ENCODE measurements at regions of chr1 and their contacts with region 1.

Region 1: DNA sequence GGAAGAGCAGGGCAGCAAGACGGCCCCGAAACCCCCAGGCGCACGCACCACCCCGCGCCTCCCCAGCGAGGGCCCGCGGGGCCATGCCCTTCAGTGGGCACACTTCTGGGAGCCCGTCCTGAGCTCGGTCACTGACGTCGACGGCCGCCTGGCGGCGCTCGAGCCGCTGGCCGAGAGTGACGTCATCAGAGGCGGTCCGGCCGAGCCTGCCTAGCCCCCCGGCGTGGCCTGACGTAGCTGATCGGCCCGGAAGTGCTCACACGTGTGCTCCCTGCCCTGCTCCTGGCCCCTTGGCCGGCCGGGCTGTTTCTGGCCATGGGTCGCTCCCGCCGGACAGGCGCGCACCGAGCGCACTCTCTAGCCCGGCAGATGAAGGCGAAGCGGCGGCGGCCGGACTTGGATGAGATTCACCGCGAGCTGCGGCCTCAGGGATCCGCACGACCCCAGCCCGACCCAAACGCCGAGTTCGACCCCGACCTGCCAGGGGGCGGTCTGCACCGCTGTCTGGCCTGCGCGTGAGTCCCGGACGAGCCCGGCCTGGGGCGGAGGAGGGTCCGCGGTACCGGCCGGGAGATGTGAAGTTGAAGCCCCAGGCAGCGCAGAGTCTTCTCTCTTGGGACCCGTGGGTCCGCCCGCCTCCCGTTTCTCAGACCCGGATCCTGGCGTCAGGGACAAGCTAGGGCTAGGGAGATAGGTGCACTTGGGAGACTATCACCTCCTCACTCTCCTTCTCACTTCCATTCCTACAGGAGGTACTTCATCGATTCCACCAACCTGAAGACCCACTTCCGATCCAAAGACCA is at the start of gene ZNF593:
- DNase-seq: peak; percentile 92 to 94
- ATAC-seq: peak; percentile 96 to 98 (median 97)
- H3K4me3 ChIP-seq: peak within 1 kb of the TSS; percentile 63 to 100 (median 88)
- H3K27ac ChIP-seq: peak within 1 kb of the TSS in 9 of 10 donors; percentile 79 to 89 (median 82)
- H3K4me1 ChIP-seq: peaks cover 5 to 33% (median 16%) of the 10 kb centered on the region in 9 donors
- H3K27me3 ChIP-seq: no peaks in the 10 kb centered on the region
- CTCF ChIP-seq: peak; percentile 80 to 97 (median 91)
- total RNA-seq, gene ZNF593: 10.7 to 26.0 (median 18.3) TPM

Region 2: DNA sequence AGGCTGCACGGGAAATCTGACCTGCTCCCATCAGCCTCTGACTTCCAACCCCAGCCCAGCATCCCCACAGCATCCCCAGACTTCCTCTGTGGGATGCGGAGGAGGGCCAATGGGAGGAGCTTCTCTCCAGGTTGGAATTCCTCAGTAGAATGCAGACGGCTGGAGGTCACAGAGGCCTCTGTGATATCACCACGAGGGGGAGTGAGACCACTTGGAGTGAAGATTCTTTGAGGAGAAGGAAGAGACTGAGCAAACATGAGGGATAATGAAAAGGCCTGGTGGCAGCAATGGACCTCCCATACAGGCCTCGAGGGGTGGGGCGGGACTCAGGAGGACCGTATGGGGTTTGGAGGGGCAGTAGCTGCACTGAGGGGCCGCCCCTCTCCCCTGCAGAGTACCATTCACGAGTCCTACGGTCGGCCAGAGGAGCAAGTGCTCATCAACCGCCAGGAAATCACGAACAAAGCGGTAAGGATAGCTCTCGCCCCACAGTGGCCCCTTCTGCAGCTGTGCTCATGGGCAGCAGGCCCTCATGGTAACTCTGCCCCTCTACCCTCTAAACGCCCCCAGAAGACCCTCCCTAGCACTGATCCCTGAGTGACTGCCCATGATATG is 20.6 kb after region 1 on chr1 and contains the start of gene CATSPER4:
- intact Hi-C with region 1: no loop called
- DNase-seq: no peak
- ATAC-seq: peak in 1 of 8 donors; percentile 28
- H3K4me3 ChIP-seq: no peak within 1 kb of the TSS
- H3K27ac ChIP-seq: no peak within 1 kb of the TSS
- H3K4me1 ChIP-seq: no peaks in the 10 kb centered on the region
- H3K27me3 ChIP-seq: no peaks in the 10 kb centered on the region
- CTCF ChIP-seq: peak in 5 of 9 donors; percentile 11 to 27 (median 24)
- total RNA-seq, gene CATSPER4: not detected

Region 3: GRCh38 chr1:26225033-26225831 is 55.4 kb after region 1 on chr1:
- intact Hi-C with region 1: loop called in 8 of 10 experiments (anchors 2 to 10 kb)
- DNase-seq: peak; percentile 65 to 76
- ATAC-seq: peak; percentile 85 to 94 (median 92)
- H3K4me3 ChIP-seq: peak overlapping the region; percentile 36 to 62 (median 55)
- H3K27ac ChIP-seq: peak overlapping the region in 9 of 10 donors; percentile 5 to 71 (median 56)
- H3K4me1 ChIP-seq: peaks cover 0 to 20% (median 12%) of the 10 kb centered on the region in 9 donors
- H3K27me3 ChIP-seq: peaks cover 0 to 28% (median 14%) of the 10 kb centered on the region in 7 donors
- CTCF ChIP-seq: no peak

Region 4: GRCh38 chr1:26496861-26497260 is 327.0 kb after region 1 on chr1:
- intact Hi-C with region 1: no loop called
- DNase-seq: no peak
- ATAC-seq: no peak
- H3K4me3 ChIP-seq: no peak overlapping the region
- H3K27ac ChIP-seq: no peak overlapping the region
- H3K4me1 ChIP-seq: peaks cover 2 to 20% (median 15%) of the 10 kb centered on the region in 9 donors
- H3K27me3 ChIP-seq: no peaks in the 10 kb centered on the region
- CTCF ChIP-seq: no peak

Region 5: DNA sequence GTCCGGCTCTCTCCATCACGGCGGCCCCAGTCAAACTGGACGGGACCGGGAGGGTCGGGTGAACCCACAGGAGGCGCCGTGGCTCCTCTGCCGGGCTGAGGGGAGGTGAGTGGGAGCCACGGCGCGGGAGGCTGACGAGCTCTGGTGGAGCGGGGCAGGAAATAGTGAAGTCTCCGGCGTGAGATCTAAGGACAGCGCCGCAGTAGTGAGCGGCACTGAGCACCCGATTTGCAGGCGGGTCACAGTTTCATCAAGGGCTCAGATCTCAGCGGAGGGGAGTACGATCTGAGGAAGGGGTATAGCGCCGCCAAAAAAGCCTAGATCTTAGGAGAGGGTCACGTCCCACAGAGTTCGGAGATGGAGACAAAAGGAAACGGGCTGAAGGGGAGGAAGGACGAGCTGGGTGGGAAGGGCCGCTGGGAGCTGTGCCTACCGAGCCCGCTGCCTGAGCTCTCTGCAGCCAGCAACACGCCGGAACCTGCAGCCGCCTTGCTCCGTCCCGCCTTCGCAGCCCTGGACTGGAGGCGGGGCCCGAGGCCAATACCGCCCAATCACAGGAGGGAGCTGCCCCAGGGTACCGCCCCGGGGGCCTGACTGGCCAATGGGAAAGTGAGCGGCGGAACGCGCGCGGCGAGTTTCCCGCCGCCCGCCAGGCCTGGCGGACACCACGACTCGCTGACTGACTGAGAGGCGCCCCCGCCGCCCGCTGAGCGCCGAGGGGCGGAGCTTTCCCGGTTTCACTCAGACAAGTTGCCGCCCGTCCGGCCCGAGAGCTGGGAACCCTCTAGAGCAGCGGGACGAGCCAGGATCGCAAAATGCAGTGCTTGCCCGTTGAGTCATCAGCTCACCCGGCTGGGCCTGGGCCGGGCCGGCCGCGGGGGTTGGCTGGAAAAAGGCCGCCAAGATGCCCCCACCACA is 695.0 kb after region 1 on chr1:
- intact Hi-C with region 1: no loop called
- DNase-seq: peak; percentile 96 to 97
- ATAC-seq: peak; percentile 97 to 99 (median 99)
- H3K4me3 ChIP-seq: peak overlapping the region; percentile 47 to 78 (median 70)
- H3K27ac ChIP-seq: peak overlapping the region; percentile 82 to 99 (median 96)
- H3K4me1 ChIP-seq: peaks cover 0 to 22% (median 15%) of the 10 kb centered on the region in 9 donors
- H3K27me3 ChIP-seq: no peaks in the 10 kb centered on the region
- CTCF ChIP-seq: peak in 2 of 9 donors; percentile 13 to 14